Heart right ventricle (tissue), 16 donors: ENCODE measurements at regions of chr7 and their contacts with region 1.

Region 1: GRCh38 chr7:154927624-154928143 is 75.2 kb downstream of the PAXIP1 start:
- DNase-seq: peak in 1 of 2 donors; percentile 84
- ATAC-seq: peak; percentile 60 to 92 (median 84)
- H3K4me3 ChIP-seq: peak overlapping the region; percentile 42 to 76 (median 64)
- H3K27ac ChIP-seq: peak overlapping the region in 9 of 10 donors; percentile 76 to 92 (median 82)
- H3K4me1 ChIP-seq: peaks cover 0 to 23% (median 11%) of the 10 kb centered on the region in 9 donors
- H3K27me3 ChIP-seq: peaks cover 0 to 1% (median 0%) of the 10 kb centered on the region in 7 donors
- CTCF ChIP-seq: peak; percentile 28 to 83 (median 72)

Region 2: GRCh38 chr7:154546946-154547587 is 380.6 kb before region 1 on chr7:
- intact Hi-C with region 1: no loop called
- DNase-seq: no peak
- ATAC-seq: peak in 2 of 8 donors; percentile 34 to 35
- H3K4me3 ChIP-seq: no peak overlapping the region
- H3K27ac ChIP-seq: no peak overlapping the region
- H3K4me1 ChIP-seq: no peaks in the 10 kb centered on the region
- H3K27me3 ChIP-seq: no peaks in the 10 kb centered on the region
- CTCF ChIP-seq: no peak

Region 3: GRCh38 chr7:154892462-154892861 is 35.2 kb before region 1 on chr7:
- intact Hi-C with region 1: no loop called
- DNase-seq: no peak
- ATAC-seq: no peak
- H3K4me3 ChIP-seq: no peak overlapping the region
- H3K27ac ChIP-seq: no peak overlapping the region
- H3K4me1 ChIP-seq: no peaks in the 10 kb centered on the region
- H3K27me3 ChIP-seq: peaks cover 0 to 33% (median 24%) of the 10 kb centered on the region in 7 donors
- CTCF ChIP-seq: no peak

Region 4: GRCh38 chr7:154953006-154953684 is 25.5 kb after region 1 on chr7:
- intact Hi-C with region 1: loop called in 1 of 10 experiments (anchors 1 kb)
- DNase-seq: peak; percentile 29 to 54
- ATAC-seq: no peak
- H3K4me3 ChIP-seq: no peak overlapping the region
- H3K27ac ChIP-seq: no peak overlapping the region
- H3K4me1 ChIP-seq: no peaks in the 10 kb centered on the region
- H3K27me3 ChIP-seq: no peaks in the 10 kb centered on the region
- CTCF ChIP-seq: peak; percentile 9 to 74 (median 62)

Region 5: DNA sequence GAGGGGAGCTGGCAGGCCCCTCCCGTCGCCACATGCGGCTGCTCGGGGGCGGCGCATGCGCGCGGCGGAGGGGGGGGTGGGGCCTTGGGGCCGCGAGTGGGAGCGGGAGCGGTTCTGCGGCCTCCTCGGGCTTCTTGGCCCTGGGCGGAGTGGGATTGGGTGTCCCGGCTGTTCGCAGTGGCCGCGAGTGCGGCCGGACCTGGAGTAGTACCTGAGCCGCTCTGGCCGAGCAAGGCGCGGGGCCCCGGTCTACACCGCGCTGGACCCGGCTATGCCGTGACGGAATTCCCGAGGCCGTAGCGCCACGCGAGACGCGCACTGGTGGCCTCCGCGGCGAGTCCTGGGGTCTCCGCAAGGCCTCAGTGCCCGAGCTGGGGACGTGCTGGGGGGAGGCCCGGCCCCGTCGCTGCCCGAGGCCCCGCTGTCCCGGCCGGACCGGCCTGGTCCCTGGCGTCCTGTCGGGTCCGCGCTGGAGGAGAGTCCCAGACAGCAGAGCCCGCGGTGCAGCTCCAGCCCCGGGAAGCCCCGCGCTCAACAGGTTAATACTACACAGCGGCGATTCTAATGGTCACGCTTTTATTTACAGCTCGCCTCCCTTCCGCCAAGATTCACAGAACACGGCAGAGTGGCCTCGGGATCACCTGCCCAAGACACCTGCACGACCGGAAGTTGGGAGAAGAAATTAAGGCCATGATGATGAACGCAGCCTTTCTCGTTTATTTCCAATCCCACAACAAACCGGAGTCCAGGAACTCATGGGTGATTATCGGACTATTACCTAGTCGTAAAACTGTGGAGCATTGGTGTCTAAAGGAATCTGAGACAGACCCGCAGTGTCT is 75.9 kb after region 1 on chr7:
- intact Hi-C with region 1: loop called in 2 of 10 experiments (anchors 5 kb)
- DNase-seq: peak; percentile 72 to 80
- ATAC-seq: peak; percentile 97 to 99 (median 98)
- H3K4me3 ChIP-seq: peak overlapping the region; percentile 72 to 100 (median 95)
- H3K27ac ChIP-seq: peak overlapping the region; percentile 76 to 97 (median 93)
- H3K4me1 ChIP-seq: peaks cover 2 to 28% (median 16%) of the 10 kb centered on the region in 9 donors
- H3K27me3 ChIP-seq: no peaks in the 10 kb centered on the region
- CTCF ChIP-seq: no peak

Region 6: GRCh38 chr7:155190688-155191087 is 263.0 kb after region 1 on chr7:
- intact Hi-C with region 1: loop called in 4 of 10 experiments (anchors 10 kb)
- DNase-seq: peak; percentile 35 to 59
- ATAC-seq: peak in 7 of 8 donors; percentile 63 to 81 (median 67)
- H3K4me3 ChIP-seq: peak overlapping the region in 3 of 10 donors; percentile 5 to 18 (median 15)
- H3K27ac ChIP-seq: no peak overlapping the region
- H3K4me1 ChIP-seq: peaks cover 0 to 4% (median 2%) of the 10 kb centered on the region in 9 donors
- H3K27me3 ChIP-seq: peaks cover 0 to 42% (median 13%) of the 10 kb centered on the region in 7 donors
- CTCF ChIP-seq: peak; percentile 77 to 88 (median 83)

Region 7: GRCh38 chr7:155344600-155345433 is 417.1 kb after region 1 on chr7:
- intact Hi-C with region 1: loop called (anchors 1 to 10 kb)
- DNase-seq: peak; percentile 65 to 84
- ATAC-seq: peak; percentile 88 to 97 (median 96)
- H3K4me3 ChIP-seq: peak overlapping the region in 9 of 10 donors; percentile 24 to 50 (median 40)
- H3K27ac ChIP-seq: peak overlapping the region in 1 of 10 donors; percentile 15
- H3K4me1 ChIP-seq: peaks cover 0 to 11% (median 8%) of the 10 kb centered on the region in 9 donors
- H3K27me3 ChIP-seq: peaks cover 0 to 30% (median 17%) of the 10 kb centered on the region in 7 donors
- CTCF ChIP-seq: peak; percentile 78 to 95 (median 87)

Region 8: DNA sequence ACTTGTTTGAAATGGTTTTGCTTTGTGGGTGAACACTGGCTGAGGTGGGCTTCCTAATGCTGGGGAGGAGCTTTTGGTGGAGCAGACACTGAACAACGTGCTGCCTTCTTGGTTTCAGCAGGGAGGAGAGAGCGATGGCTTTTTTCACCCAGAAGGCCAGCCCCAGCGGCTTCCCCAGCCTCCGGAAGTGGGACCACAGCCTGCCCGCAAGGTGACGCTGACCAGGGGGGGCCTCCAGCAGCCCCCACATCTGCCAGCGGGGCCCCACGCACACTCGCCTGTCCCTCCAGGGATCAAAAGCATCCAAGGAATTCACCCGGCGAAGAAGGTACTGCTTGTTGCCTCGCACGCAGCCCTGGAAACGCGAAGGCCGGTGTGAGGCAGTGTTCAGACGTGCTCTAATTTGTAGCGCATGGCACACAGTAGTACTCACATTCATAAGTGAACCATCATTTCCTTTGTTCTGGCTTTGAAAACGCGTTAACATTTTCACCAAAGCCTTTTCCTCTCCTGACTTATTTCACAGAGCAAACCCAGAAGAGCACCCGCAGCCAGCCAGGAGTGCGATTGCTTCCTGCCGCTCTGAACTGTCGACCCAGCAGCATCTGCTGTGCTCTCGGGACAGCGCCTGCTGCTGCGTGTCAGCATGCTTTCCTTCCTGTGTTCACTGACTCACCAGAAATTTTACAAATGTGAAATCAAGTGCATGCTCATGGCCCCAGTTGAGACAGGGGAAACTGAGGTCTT is 836.2 kb after region 1 on chr7:
- intact Hi-C with region 1: loop called in 2 of 10 experiments (anchors 10 kb)
- DNase-seq: peak in 1 of 2 donors; percentile 19
- ATAC-seq: peak in 7 of 8 donors; percentile 53 to 76 (median 60)
- H3K4me3 ChIP-seq: peak overlapping the region in 2 of 10 donors; percentile 11 to 18
- H3K27ac ChIP-seq: peak overlapping the region in 9 of 10 donors; percentile 29 to 90 (median 68)
- H3K4me1 ChIP-seq: peaks cover 5 to 60% (median 35%) of the 10 kb centered on the region in 9 donors
- H3K27me3 ChIP-seq: no peaks in the 10 kb centered on the region
- CTCF ChIP-seq: no peak